Heart left ventricle (tissue), 16 donors: ENCODE measurements at regions of chr1 and their contacts with region 1.

Region 1: DNA sequence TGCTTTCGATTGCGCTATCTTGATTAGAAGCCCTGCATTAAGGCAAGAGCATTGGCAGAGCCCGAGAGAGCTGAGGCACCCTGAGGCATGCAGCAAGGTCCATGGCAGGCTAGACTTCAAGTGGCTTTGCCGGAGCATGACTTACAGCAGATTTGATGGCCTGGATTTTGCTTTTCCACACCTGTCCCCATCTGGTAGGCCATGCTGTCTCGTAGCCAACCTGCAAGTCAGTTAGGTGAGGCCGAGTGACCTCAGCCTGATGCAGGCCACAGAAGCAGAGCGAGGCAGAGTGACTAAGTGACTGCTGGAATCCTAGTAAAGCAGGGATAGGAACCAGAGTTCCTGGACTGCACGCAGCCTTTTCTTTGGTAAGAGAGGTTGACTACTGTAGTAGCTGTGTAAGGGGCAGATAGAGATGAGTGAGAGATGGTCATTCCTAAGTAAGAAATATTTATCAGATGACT is 148.9 kb downstream of the PBX1 start:
- DNase-seq: peak in 2 of 5 donors; percentile 60 to 62
- ATAC-seq: peak; percentile 30 to 79 (median 44)
- H3K4me3 ChIP-seq: no peak overlapping the region
- H3K27ac ChIP-seq: peak overlapping the region in 11 of 12 donors; percentile 28 to 81 (median 60)
- H3K4me1 ChIP-seq: peaks cover 3 to 94% (median 70%) of the 10 kb centered on the region in 12 donors
- H3K27me3 ChIP-seq: no peaks in the 10 kb centered on the region
- CTCF ChIP-seq: no peak
- POLR2A ChIP-seq: no peak

Region 2: GRCh38 chr1:164644774-164645235 is 63.1 kb before region 1 on chr1:
- intact Hi-C with region 1: loop called in 2 of 10 experiments (anchors 5 kb)
- DNase-seq: no peak
- ATAC-seq: peak in 2 of 4 donors; percentile 13 to 47
- H3K4me3 ChIP-seq: no peak overlapping the region
- H3K27ac ChIP-seq: peak overlapping the region in 8 of 12 donors; percentile 1 to 80 (median 23)
- H3K4me1 ChIP-seq: peaks cover 0 to 91% (median 52%) of the 10 kb centered on the region in 12 donors
- H3K27me3 ChIP-seq: no peaks in the 10 kb centered on the region
- CTCF ChIP-seq: no peak
- POLR2A ChIP-seq: no peak

Region 3: GRCh38 chr1:164748253-164748899 is 40.5 kb after region 1 on chr1:
- intact Hi-C with region 1: loop called in 2 of 10 experiments (anchors 5 kb)
- DNase-seq: peak in 4 of 5 donors; percentile 43 to 64 (median 54)
- ATAC-seq: peak; percentile 75 to 94 (median 90)
- H3K4me3 ChIP-seq: no peak overlapping the region
- H3K27ac ChIP-seq: peak overlapping the region in 11 of 12 donors; percentile 7 to 77 (median 61)
- H3K4me1 ChIP-seq: peaks cover 2 to 58% (median 25%) of the 10 kb centered on the region in 12 donors
- H3K27me3 ChIP-seq: no peaks in the 10 kb centered on the region
- CTCF ChIP-seq: no peak
- POLR2A ChIP-seq: no peak